ENCODE measurements at regions of chr14 and their contacts with region 1.

Region 1: DNA sequence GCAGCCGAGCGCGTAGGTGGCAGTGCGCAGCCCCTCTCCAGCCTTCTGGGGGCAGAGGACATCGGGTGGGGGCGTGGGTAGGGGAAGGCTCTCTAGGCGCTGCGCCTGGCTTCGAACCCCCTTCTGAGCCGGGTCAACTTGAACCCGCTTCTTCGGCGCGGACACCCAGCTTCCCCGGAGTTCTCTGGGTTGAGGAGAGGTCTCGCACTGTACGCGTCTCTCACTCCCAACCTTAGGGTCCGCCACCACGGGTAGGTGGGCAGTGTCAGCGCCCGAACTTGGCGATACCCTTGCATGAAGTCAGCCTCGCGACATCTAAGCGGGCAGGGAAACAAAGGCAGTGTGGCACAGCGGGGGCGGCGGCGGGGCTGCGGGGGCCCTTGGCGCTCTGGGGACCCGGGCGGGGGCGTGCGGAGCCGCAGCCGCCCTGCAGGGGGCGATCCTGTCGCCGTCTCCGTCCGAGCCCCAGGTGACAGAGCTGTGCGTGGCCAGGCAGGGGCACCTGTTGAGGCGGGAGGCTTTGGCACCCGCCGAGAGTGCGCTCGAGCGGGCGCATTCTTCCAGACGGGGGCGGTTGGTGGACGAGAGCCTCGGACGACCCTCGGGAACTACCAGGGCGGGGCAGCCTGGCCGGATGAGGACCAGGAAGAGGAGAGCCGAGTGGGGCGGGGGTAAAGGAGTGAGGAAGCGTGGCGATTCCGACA is 1.1 kb downstream of the GALNT16 start:
- DNase-seq: peak; percentile 43
- ATAC-seq: peak; percentile 56 to 58

Region 2: GRCh38 chr14:67373347-67373746 is 1887.7 kb before region 1 on chr14:
- intact Hi-C with region 1: no loop called
- DNase-seq: no peak
- ATAC-seq: no peak

Region 3: GRCh38 chr14:69226178-69226577 is 34.8 kb before region 1 on chr14:
- intact Hi-C with region 1: no loop called
- DNase-seq: peak; percentile 35
- ATAC-seq: peak; percentile 82 to 91

Region 4: DNA sequence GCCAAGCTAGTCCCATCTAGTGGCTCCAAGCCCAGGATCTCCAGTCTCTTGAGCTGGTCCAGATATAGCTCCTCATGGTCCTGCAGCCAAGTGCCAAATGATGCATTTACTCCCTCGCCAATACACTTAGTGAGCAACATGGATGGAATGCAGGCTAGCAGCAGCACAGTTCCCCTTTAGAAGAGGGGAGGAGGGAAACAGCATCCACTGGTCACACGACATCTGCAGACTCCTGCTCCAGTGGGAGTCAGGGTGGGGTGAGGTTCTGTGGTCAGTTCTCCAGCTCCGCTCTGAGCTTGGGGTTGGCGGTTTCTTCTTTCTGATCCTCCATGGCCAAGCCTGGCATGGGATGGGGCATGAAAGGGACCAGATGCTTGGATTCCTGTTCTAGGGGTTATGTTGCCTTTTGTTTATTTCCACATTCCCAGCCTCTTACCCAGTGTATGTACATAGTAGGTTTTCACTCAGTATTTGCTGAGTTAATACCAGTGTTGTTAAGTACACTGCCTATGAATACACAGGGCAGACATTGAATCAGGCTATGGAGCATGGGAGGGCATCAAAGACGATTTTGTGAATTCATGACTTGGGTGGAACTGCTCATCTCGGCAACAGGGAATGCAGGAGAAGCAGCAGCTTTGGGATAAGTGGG is 56.2 kb after region 1 on chr14:
- intact Hi-C with region 1: loop called in 1 of 2 experiments (anchors 10 kb)
- DNase-seq: peak; percentile 69
- ATAC-seq: peak; percentile 94

Region 5: DNA sequence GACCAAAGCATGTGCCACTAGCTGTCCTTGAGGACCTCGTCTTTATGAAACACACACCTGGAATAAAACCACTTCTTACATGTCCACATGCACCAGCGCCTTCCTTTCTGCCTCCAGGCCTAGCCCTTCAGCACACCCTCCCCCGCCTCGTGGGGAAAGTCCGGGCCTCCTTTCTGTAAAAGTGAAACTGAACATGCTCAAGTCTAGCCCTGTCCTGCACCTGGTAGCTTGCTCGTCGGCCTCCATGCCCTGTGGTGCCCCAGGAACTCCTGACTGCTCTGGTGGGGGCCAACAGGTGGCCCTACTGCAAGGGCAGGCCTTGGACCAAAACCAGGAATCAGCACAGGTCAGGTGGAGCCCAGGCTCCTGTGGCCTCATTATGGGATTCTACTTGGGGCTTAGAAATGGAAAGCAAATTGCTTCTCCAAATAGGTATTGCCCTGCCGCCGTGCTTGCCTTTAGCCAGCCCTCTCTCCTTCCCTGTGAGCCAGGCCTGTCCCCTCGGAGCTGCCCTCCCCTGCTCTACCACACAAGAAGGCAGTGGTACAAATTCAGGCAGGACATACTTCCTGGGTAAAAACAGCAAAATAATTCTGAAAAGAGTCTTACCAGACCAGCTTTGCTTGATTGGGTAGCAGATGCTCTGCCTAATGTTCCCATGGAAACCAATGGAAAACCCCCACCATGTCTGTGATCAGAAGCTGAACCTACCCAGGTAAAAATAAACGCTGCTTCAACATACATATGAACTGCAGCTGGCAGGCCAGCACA is 93.6 kb after region 1 on chr14:
- intact Hi-C with region 1: loop called in 1 of 2 experiments (anchors 10 kb)
- DNase-seq: no peak
- ATAC-seq: no peak